Activated T-helper 1 cell treated with anti-CD3 and anti-CD28 coated beads, Interleukin-12 subunit alpha, Interleukin-12 subunit beta, Interleukin-2, Interleukin-4 antibody, amounts not matched to agents 30 ng/mL and 10 ng/mL and 1 ng/mL, durations not matched to agents 14 hours and 24 hours and 36 hours (primary cell): ENCODE measurements at regions of chr5 and their contacts with region 1.

Region 1: DNA sequence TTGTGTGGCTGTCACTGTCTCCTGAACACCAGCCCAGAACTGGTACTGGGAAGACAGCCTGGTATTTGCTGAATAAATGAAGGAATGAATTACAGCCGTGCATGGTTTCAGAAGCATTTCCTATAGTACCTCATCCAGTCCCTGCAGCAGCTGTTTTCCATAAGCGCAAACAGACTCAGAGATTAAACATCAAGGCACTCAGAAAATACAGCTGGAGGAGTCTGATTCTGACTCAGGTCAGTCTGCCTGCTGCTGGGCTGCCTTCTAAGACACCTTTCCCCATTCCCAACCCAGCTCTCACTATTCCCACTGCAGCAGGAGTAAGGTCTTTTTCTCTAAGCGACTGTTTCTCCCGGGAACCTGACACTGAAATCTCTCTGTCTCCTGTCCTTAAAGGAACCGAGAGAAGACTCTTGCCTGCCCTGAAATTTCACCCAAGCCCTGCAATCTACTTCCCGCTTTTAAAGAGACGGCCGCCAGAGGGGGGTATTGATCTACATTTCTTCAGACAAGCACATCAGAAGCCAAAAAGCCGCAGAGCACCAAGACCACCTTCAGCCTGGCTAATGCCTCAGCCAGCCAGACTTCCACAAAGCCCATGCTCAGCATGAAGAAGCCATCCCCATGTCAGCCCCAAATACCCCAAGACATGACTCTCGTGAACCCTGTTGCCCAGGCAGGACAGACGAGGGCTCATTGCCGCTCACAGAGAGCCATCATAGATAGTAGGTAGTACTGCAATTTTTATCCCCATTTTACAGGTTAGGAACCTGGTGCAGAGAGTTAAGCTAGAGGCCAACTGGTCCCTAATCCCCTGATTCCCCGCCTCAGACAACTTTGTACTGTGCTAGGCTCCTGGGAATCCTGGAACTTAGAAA is 5.4 kb upstream of the FOXI1 start:
- DNase-seq: peak; percentile 41
- H3K4me3 Mint-ChIP-seq: no peak overlapping the region
- H3K27ac Mint-ChIP-seq: no peak overlapping the region
- H3K4me1 Mint-ChIP-seq: no peaks in the 10 kb centered on the region
- H3K27me3 Mint-ChIP-seq: peaks cover 11% of the 10 kb centered on the region

Region 2: GRCh38 chr5:169906745-169907649 is 193.3 kb before region 1 on chr5:
- intact Hi-C with region 1: no loop called
- DNase-seq: no peak
- H3K4me3 Mint-ChIP-seq: no peak overlapping the region
- H3K27ac Mint-ChIP-seq: no peak overlapping the region
- H3K4me1 Mint-ChIP-seq: peaks cover 2% of the 10 kb centered on the region
- H3K27me3 Mint-ChIP-seq: no peaks in the 10 kb centered on the region

Region 3: DNA sequence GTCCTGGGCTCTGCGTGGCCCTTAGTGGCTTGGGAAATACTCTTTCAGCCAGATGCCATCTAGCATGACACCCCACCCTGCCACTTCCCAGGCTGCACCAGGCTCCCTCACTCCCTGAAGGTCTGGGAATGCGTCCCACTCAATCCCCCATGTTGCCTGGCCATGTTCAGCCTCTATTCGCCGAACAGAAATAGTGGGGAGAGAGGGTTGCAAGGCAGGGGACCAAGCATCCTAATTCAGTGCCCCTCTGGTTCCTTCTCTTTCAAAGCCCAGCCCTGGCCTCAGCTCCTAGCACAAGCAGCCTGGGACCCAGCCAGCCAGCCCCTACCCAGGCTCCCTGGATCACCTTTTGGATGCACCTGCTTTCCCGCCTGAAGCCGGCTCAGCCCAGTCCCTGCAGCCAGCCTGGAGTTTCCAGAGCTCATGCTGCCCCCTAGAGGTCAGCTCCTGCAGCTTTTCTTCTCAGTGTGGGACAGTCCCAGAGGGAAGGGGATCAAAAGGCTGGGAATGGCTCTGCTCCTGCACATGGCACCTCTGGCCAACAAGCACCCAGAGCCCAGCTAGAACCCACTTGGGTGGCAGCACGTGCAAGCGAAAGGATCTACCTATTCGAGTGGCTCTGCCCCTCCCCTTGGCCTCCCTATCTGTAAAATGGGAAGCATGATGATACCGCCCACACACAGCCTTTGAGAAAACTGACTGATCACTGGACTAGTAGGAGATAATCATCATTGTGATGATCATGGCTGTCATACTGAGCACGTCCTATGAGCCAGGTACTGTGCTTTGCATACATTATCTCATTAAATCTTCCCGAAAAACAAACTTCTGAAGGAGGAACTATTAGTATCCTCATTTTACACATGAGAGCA is 83.7 kb after region 1 on chr5:
- intact Hi-C with region 1: loop called (anchors 1 kb)
- DNase-seq: peak; percentile 15
- H3K4me3 Mint-ChIP-seq: no peak overlapping the region
- H3K27ac Mint-ChIP-seq: no peak overlapping the region
- H3K4me1 Mint-ChIP-seq: no peaks in the 10 kb centered on the region
- H3K27me3 Mint-ChIP-seq: peaks cover 5% of the 10 kb centered on the region

Region 4: DNA sequence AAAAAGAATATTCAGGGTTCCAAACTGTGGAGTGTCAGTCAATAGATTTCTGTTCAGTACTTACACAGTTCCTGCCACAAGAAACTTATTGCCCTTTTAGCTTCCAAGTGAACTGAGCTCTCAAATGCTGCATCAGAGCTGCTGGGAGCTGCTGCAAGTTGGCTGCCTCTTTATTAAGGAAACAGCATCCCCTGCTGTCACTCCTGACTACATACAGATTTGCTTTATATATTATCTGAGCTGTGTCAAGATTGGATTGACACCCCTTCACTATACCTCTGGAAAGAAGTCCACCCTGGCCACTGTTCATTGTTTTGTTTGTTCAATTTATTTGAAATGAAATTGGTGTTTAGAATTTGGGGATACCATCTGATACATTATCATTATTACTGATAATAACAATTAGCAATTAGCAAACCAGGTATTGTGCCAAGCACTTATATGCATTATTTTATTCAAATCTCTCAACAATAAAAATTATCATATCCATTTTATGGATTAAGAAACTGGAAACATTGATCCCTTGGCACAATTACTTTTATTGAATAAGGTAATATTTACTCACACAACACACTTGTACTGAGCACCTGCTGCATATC is 116.1 kb after region 1 on chr5:
- intact Hi-C with region 1: loop called (anchors 1 kb)
- DNase-seq: no peak
- H3K4me3 Mint-ChIP-seq: no peak overlapping the region
- H3K27ac Mint-ChIP-seq: no peak overlapping the region
- H3K4me1 Mint-ChIP-seq: no peaks in the 10 kb centered on the region
- H3K27me3 Mint-ChIP-seq: peaks cover 9% of the 10 kb centered on the region

Region 5: GRCh38 chr5:170338933-170339779 is 238.9 kb after region 1 on chr5:
- intact Hi-C with region 1: loop called (anchors 2 kb)
- DNase-seq: peak; percentile 45
- H3K4me3 Mint-ChIP-seq: no peak overlapping the region
- H3K27ac Mint-ChIP-seq: peak overlapping the region; percentile 63
- H3K4me1 Mint-ChIP-seq: peaks cover 20% of the 10 kb centered on the region
- H3K27me3 Mint-ChIP-seq: peaks cover 4% of the 10 kb centered on the region

Region 6: DNA sequence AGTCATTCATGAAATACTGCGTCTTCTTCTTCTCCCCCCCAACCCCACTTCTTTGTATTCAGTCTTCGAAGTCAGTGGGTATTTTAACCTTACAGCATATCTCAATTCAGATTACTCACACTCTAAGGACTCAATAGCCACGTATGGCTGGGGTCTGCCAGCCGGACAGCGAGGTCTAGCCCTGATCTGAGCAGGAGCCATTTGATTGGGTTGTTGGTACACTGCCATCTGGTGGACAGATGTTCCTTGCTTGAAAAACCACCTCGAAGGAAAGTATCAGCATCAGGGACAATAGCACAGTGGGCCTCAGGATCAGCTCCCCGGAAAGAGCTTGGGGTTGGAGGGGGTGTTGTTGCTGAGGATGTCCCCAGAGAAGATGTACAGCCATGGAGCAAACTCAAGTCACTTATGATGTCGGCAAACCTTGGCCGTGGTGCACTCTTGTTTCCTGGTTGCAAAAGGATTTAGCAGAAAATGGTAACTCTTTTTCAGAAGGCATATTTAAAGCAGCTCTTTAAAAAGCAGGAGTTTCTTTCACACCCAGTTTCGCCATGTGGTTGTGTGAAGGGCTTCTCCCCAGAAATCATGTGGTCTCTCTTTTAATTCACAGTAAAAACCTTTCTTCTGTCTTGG is 320.6 kb after region 1 on chr5:
- intact Hi-C with region 1: loop called (anchors 1 kb)
- DNase-seq: peak; percentile 20
- H3K4me3 Mint-ChIP-seq: no peak overlapping the region
- H3K27ac Mint-ChIP-seq: no peak overlapping the region
- H3K4me1 Mint-ChIP-seq: no peaks in the 10 kb centered on the region
- H3K27me3 Mint-ChIP-seq: peaks cover 25% of the 10 kb centered on the region

Region 7: GRCh38 chr5:170633235-170634081 is 533.2 kb after region 1 on chr5:
- intact Hi-C with region 1: loop called (anchors 2 kb)
- DNase-seq: no peak
- H3K4me3 Mint-ChIP-seq: peak overlapping the region; percentile 32
- H3K27ac Mint-ChIP-seq: peak overlapping the region; percentile 3
- H3K4me1 Mint-ChIP-seq: peaks cover 8% of the 10 kb centered on the region
- H3K27me3 Mint-ChIP-seq: peaks cover 13% of the 10 kb centered on the region